ENCODE measurements at regions of chr9 and their contacts with region 1.

Region 1: DNA sequence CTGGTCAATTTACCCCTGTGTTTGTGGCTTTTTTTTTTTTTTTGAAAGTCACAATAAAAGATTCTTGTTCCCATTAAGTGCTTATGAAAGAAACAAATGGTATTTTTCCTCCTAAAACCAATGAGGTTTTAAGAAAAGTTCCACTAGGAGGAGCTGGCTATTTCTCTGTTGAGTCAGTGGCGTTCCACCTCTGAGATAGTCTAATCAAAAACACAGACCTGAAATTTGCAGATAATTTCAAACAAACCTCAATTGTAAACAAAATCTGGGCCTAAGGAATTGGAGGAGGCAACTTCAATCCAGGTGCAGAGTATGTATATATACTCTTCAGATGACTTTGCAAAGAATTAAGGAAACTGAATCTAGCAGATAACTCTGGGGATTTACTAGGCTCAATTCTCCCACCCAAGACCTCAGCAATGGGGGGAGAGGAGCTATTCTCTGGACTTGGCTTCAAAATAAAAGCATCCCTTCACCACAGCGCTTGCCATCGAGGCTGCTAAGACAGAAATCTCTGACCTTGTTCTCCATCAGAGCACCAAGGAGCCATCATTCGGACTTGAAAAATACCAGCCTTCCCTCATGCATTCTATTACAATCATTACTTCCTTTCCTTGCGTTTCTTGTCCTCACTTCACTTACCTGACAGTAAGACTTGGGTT is 52.4 kb downstream of the FANCC start:
- DNase-seq: no peak
- ATAC-seq: no peak
- H3K4me3 ChIP-seq: no peak overlapping the region
- H3K27ac ChIP-seq: no peak overlapping the region
- H3K4me1 ChIP-seq: peaks cover 50% of the 10 kb centered on the region
- H3K27me3 ChIP-seq: no peaks in the 10 kb centered on the region
- CTCF ChIP-seq: peak; percentile 33
- EP300 ChIP-seq: no peak
- POLR2A ChIP-seq: no peak
- RAD21 ChIP-seq: no peak

Region 2: DNA sequence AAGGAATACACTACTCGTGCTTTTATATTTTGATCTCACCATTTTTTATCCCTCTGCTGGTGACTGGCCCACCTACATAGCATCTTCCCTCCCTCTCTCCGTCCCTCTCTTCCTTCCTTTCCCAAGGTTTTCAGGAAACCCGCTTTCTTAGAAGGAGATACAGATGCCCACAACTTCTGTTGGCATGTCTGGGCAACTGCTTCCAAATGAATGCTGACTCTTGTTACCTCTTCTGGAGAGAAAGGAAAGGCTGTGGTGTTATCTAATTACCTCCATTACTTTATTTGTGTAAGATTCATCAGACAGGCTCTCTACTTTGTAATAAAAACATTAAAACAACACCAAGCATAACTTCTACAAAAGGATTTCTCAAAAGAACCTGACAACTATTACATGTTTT is 32.2 kb after region 1 on chr9:
- CTCF ChIA-PET with region 1: no interaction called
- POLR2A ChIA-PET with region 1: no interaction called
- in situ Hi-C with region 1: no loop called
- intact Hi-C with region 1: no loop called
- DNase-seq: no peak
- ATAC-seq: no peak
- H3K4me3 ChIP-seq: no peak overlapping the region
- H3K27ac ChIP-seq: no peak overlapping the region
- H3K4me1 ChIP-seq: peaks cover 37% of the 10 kb centered on the region
- H3K27me3 ChIP-seq: no peaks in the 10 kb centered on the region
- CTCF ChIP-seq: no peak
- EP300 ChIP-seq: no peak
- POLR2A ChIP-seq: no peak
- RAD21 ChIP-seq: no peak

Region 3: GRCh38 chr9:95336281-95336680 is 71.2 kb after region 1 on chr9:
- CTCF ChIA-PET with region 1: no interaction called
- POLR2A ChIA-PET with region 1: interaction called, 4 read pairs
- in situ Hi-C with region 1: no loop called
- intact Hi-C with region 1: loop called (anchors 1 kb)
- DNase-seq: peak; percentile 30
- ATAC-seq: peak; percentile 92
- H3K4me3 ChIP-seq: no peak overlapping the region
- H3K27ac ChIP-seq: no peak overlapping the region
- H3K4me1 ChIP-seq: peaks cover 17% of the 10 kb centered on the region
- H3K27me3 ChIP-seq: peaks cover 1 to 4% of the 10 kb centered on the region in 2 experiments; a peak in 2 of 5 replicates
- CTCF ChIP-seq: peak; percentile 65
- EP300 ChIP-seq: no peak
- POLR2A ChIP-seq: no peak
- RAD21 ChIP-seq: 0 out of 2 replicates have a peak, but pooled peaks have one; percentile 31